Panc1 (cell line): ENCODE measurements at regions of chr15 and their contacts with region 1.

Region 1: GRCh38 chr15:78709263-78709882 is 68.4 kb upstream of the CHRNB4 start:
- DNase-seq: peak; percentile 35
- ATAC-seq: peak; percentile 99
- H3K4me3 ChIP-seq: peak overlapping the region; percentile 24 to 38; a peak in 3 of 4 replicates
- H3K27ac ChIP-seq: no peak overlapping the region
- H3K4me1 ChIP-seq: peaks cover 7% of the 10 kb centered on the region; the same call in 1 of the 2 replicates
- H3K27me3 ChIP-seq: peaks cover 15% of the 10 kb centered on the region
- CTCF ChIP-seq: peak; percentile 95

Region 2: DNA sequence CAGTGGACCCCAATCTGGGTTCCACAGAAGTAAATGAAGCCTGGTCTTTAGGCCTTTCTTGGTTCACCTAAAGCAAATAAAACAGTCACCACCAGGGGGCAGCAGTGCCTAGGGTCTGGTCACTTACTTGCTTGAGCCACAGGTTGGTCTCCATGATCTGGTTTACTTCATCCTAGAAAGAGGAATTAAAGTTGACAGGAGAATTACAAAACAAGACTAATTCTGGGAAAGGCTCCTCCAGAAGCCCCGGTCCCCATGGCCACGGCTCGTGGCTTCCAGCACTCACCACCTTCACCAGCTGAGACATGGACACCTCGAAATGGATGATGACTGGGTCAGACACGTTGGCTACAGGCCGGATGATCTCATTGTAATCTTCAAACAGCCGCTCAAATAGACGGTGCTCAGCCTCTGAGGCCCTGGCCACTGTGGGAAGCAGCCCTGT is 90.9 kb before region 1 on chr15:
- CTCF ChIA-PET with region 1: interaction called, 3 read pairs
- POLR2A ChIA-PET with region 1: no interaction called
- in situ Hi-C with region 1: no loop called
- intact Hi-C with region 1: loop called (anchors 1 kb)
- DNase-seq: peak; percentile 64
- ATAC-seq: peak; percentile 85
- H3K4me3 ChIP-seq: no peak overlapping the region
- H3K27ac ChIP-seq: no peak overlapping the region
- H3K4me1 ChIP-seq: peaks cover 7% of the 10 kb centered on the region; the same call in 1 of the 2 replicates
- H3K27me3 ChIP-seq: peaks cover 5% of the 10 kb centered on the region
- CTCF ChIP-seq: peak; percentile 89

Region 3: GRCh38 chr15:78638658-78639314 is 70.6 kb before region 1 on chr15:
- CTCF ChIA-PET with region 1: interaction called, 8 read pairs
- POLR2A ChIA-PET with region 1: no interaction called
- in situ Hi-C with region 1: no loop called
- intact Hi-C with region 1: loop called (anchors 2 kb)
- DNase-seq: no peak
- ATAC-seq: peak; percentile 85
- H3K4me3 ChIP-seq: no peak overlapping the region
- H3K27ac ChIP-seq: no peak overlapping the region
- H3K4me1 ChIP-seq: no peaks in the 10 kb centered on the region
- H3K27me3 ChIP-seq: no peaks in the 10 kb centered on the region
- CTCF ChIP-seq: peak; percentile 84

Region 4: DNA sequence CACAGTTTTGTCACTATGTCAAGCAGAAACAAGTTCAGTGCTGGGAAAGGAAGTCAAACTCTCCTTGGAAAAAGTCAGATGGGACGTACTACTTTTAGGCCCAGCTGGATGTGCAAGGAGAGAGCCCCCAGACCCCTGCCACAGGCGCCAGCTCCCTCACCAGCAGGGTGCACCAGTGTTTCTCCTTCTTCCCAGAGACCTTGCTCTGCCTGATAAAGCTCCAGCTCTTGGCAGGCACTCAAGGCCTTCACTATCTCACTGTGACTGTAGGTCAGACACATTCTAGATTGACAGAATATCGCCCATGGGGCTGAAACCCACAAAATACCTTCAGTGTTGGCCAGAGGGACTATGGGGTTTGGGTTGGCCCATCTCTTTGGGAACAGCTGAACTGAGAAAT is 13.5 kb before region 1 on chr15:
- CTCF ChIA-PET with region 1: no interaction called
- POLR2A ChIA-PET with region 1: no interaction called
- in situ Hi-C with region 1: no loop called
- intact Hi-C with region 1: no loop called
- DNase-seq: no peak
- ATAC-seq: no peak
- H3K4me3 ChIP-seq: no peak overlapping the region
- H3K27ac ChIP-seq: no peak overlapping the region
- H3K4me1 ChIP-seq: no peaks in the 10 kb centered on the region
- H3K27me3 ChIP-seq: peaks cover 3% of the 10 kb centered on the region; the same call in 1 of the 2 replicates
- CTCF ChIP-seq: no peak

Region 5: DNA sequence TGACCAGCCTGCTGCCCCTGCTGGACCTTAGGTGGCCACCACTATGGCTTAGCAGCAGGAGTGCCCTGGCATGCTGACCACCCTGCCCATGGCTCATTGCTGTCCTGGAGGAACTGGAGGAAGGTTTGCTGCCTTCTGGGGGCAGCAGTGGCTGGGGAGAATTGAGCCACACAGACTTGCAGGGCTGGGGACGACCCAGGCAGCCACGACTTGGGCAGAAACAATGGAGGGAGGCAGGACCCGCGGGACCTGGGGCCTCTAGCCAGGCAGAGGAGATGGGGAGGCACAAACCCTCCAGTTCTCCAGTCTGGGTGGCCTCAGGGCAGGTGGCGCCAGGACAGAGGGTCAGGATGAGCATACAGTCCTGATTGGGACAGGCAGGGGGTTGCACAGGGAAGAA is 69.0 kb after region 1 on chr15:
- CTCF ChIA-PET with region 1: no interaction called
- POLR2A ChIA-PET with region 1: no interaction called
- in situ Hi-C with region 1: no loop called
- intact Hi-C with region 1: no loop called
- DNase-seq: no peak
- ATAC-seq: no peak
- H3K4me3 ChIP-seq: no peak overlapping the region
- H3K27ac ChIP-seq: no peak overlapping the region
- H3K4me1 ChIP-seq: no peaks in the 10 kb centered on the region
- H3K27me3 ChIP-seq: no peaks in the 10 kb centered on the region
- CTCF ChIP-seq: no peak

Region 6: GRCh38 chr15:78930556-78931401 is 221.4 kb after region 1 on chr15:
- CTCF ChIA-PET with region 1: no interaction called
- POLR2A ChIA-PET with region 1: no interaction called
- in situ Hi-C with region 1: no loop called
- intact Hi-C with region 1: no loop called
- DNase-seq: peak; percentile 85
- ATAC-seq: peak; percentile 87
- H3K4me3 ChIP-seq: no peak overlapping the region
- H3K27ac ChIP-seq: peak overlapping the region; percentile 97
- H3K4me1 ChIP-seq: peaks cover 81% of the 10 kb centered on the region
- H3K27me3 ChIP-seq: no peaks in the 10 kb centered on the region
- CTCF ChIP-seq: no peak